Caco-2 (cell line): ENCODE measurements at regions of chr17 and their contacts with region 1.

Region 1: DNA sequence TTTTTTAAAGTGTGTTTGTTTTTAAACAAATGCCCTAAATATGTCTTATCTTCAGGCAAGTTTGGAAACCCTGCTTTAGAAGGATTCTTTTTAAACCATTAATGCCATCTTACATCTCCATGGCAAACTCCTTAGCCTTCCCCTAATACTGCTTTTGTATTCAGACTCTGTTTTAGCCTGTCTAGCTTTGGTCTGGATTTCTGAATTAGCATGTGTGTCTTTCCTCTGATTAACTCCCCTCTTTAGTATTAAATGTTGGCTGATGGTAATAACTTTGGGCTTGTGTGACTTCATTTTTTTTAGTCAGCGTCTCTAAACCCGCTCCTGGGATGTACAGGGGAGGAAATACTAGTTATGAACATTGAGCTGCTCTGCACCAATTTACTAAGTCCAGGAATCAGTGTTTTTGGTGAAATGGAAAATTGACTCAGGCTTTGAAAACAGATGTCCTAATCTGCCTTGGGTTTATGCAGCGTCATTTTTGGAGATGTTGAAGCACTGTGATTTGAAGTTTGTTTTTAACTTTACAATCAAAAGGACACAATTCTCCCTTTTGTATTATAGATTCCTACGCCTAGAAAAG is 22.2 kb downstream of the WIPF2 start:
- DNase-seq: no peak
- H3K4me3 ChIP-seq: no peak overlapping the region
- H3K4me3 Mint-ChIP-seq: no peak overlapping the region
- H3K27ac Mint-ChIP-seq: no peak overlapping the region
- H3K4me1 ChIP-seq: no peaks in the 10 kb centered on the region
- H3K4me1 Mint-ChIP-seq: no peaks in the 10 kb centered on the region
- H3K27me3 ChIP-seq: no peaks in the 10 kb centered on the region
- H3K27me3 Mint-ChIP-seq: no peaks in the 10 kb centered on the region
- CTCF ChIP-seq: no peak

Region 2: DNA sequence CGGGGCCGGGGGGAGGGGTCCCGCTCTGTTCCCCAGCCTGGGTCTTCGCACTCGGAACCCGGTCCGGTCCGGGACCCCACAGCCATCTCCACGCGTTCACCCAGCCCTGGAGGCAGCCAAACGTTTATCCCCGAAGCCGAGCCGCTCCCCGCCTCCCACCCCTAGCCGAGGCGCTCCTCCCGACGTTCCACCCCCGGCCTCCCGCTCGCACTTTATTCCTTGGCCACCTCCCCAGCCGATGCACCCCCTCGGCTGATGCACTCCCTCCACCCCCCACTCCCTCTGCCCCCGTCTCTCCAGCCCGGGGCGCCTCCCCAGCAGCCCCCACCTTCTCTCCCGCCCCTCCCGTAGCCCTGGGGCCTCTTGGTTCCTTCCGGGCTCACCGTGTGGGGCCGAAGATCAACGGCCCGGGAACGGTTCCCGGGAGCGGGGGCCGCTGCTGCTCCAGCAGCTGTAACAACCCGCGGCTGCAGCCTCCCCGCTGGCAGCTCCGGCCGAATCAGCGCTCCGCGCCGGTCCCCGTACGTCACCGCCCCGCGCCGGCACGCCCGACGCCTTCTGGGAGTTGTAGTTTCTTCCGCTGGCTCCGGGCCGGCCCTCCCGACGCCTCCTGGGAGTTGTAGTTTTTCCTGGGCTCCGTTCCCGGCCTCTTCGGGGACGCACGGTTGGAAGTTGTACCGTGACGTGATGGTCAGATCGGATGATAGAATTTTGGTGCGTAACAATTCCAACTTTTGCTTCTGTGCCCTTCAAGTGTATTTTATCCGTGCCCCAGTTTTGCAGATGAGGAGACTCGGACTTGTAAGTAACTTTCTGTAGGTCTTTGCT is 314.0 kb before region 1 on chr17 and contains the starts of genes LRRC3C and ORMDL3:
- CTCF ChIA-PET with region 1: no interaction called
- POLR2A ChIA-PET with region 1: no interaction called
- intact Hi-C with region 1: no loop called
- DNase-seq: peak; percentile 95 to 97
- H3K4me3 ChIP-seq: peak within 1 kb of the TSS; percentile 89
- H3K4me3 Mint-ChIP-seq: peak within 1 kb of the TSS; percentile 87
- H3K27ac Mint-ChIP-seq: peak within 1 kb of the TSS; percentile 97
- H3K4me1 ChIP-seq: peaks cover 29% of the 10 kb centered on the region
- H3K4me1 Mint-ChIP-seq: peaks cover 7% of the 10 kb centered on the region
- H3K27me3 ChIP-seq: no peaks in the 10 kb centered on the region
- H3K27me3 Mint-ChIP-seq: no peaks in the 10 kb centered on the region
- CTCF ChIP-seq: no peak
- total RNA-seq, gene LRRC3C: not detected in 2 replicates
- total RNA-seq, gene ORMDL3: 70.6 and 75.2 TPM in 2 replicates

Region 3: GRCh38 chr17:40230670-40231069 is 10.7 kb before region 1 on chr17:
- CTCF ChIA-PET with region 1: no interaction called
- POLR2A ChIA-PET with region 1: interaction called, 16 read pairs
- intact Hi-C with region 1: no loop called
- DNase-seq: no peak
- H3K4me3 ChIP-seq: no peak overlapping the region
- H3K4me3 Mint-ChIP-seq: no peak overlapping the region
- H3K27ac Mint-ChIP-seq: no peak overlapping the region
- H3K4me1 ChIP-seq: no peaks in the 10 kb centered on the region
- H3K4me1 Mint-ChIP-seq: no peaks in the 10 kb centered on the region
- H3K27me3 ChIP-seq: no peaks in the 10 kb centered on the region
- H3K27me3 Mint-ChIP-seq: no peaks in the 10 kb centered on the region
- CTCF ChIP-seq: no peak